ENCODE measurements at regions of chr15 and their contacts with region 1.

Region 1: GRCh38 chr15:93341164-93341563 is 252.2 kb upstream of the RGMA start:
- DNase-seq: peak; percentile 56 to 60
- H3K4me3 ChIP-seq: no peak overlapping the region
- H3K4me3 Mint-ChIP-seq: no peak overlapping the region
- H3K27ac Mint-ChIP-seq: peak overlapping the region; percentile 81
- H3K4me1 ChIP-seq: peaks cover 27% of the 10 kb centered on the region
- H3K4me1 Mint-ChIP-seq: peaks cover 16% of the 10 kb centered on the region
- H3K27me3 ChIP-seq: no peaks in the 10 kb centered on the region
- H3K27me3 Mint-ChIP-seq: no peaks in the 10 kb centered on the region
- CTCF ChIP-seq: no peak

Region 2: DNA sequence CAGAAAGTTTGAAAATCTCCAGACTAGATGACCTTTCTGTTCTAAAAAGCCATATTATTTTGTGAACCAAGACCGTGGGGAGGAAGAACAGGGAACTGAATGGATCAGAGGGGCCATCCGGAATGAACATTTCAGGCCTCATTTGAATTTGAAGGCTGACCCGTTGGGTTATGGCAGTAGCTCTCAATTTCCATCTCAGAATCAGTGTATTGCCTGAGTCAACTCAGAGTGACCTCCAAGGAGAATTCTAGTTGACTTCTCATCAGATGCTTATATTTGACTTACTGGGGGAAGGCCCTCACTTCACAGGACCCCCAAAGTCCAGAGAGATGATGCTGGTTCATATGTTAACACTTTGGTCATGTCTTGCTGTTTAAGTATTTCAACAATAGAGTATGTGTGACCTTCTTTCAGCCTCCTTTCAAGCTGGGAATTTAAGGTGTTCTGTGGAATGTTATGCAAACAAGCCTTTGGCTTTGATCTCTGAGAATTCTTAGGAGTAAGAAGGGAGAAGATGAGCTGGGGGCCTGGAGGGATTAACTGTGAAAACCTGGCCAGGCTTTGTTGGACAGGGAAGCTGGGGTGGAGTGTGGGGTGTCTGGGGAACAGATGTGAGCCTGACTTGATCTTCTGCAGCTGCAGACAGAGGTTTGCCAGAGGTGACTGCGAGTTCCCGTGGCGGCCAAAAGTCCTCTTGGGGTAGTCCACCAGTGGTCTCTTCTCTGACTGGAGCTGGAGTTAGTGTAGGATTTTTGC is 140.9 kb before region 1 on chr15:
- CTCF ChIA-PET with region 1: no interaction called
- POLR2A ChIA-PET with region 1: no interaction called
- intact Hi-C with region 1: loop called (anchors 1 kb)
- DNase-seq: peak; percentile 43 to 51
- H3K4me3 ChIP-seq: no peak overlapping the region
- H3K4me3 Mint-ChIP-seq: peak overlapping the region; percentile 2
- H3K27ac Mint-ChIP-seq: peak overlapping the region; percentile 68
- H3K4me1 ChIP-seq: peaks cover 33% of the 10 kb centered on the region
- H3K4me1 Mint-ChIP-seq: peaks cover 30% of the 10 kb centered on the region
- H3K27me3 ChIP-seq: no peaks in the 10 kb centered on the region
- H3K27me3 Mint-ChIP-seq: no peaks in the 10 kb centered on the region
- CTCF ChIP-seq: no peak

Region 3: GRCh38 chr15:93321881-93322289 is 19.3 kb before region 1 on chr15:
- CTCF ChIA-PET with region 1: no interaction called
- POLR2A ChIA-PET with region 1: no interaction called
- intact Hi-C with region 1: loop called (anchors 2 kb)
- DNase-seq: peak; percentile 81 to 82
- H3K4me3 ChIP-seq: peak overlapping the region; percentile 15
- H3K4me3 Mint-ChIP-seq: peak overlapping the region; percentile 70
- H3K27ac Mint-ChIP-seq: peak overlapping the region; percentile 96
- H3K4me1 ChIP-seq: peaks cover 19% of the 10 kb centered on the region
- H3K4me1 Mint-ChIP-seq: peaks cover 25% of the 10 kb centered on the region
- H3K27me3 ChIP-seq: no peaks in the 10 kb centered on the region
- H3K27me3 Mint-ChIP-seq: no peaks in the 10 kb centered on the region
- CTCF ChIP-seq: no peak

Region 4: GRCh38 chr15:93954985-93955748 is 614.0 kb after region 1 on chr15:
- CTCF ChIA-PET with region 1: no interaction called
- POLR2A ChIA-PET with region 1: no interaction called
- intact Hi-C with region 1: loop called (anchors 1 kb)
- DNase-seq: peak; percentile 84 to 85
- H3K4me3 ChIP-seq: no peak overlapping the region
- H3K4me3 Mint-ChIP-seq: peak overlapping the region; percentile 64
- H3K27ac Mint-ChIP-seq: peak overlapping the region; percentile 50
- H3K4me1 ChIP-seq: peaks cover 17% of the 10 kb centered on the region
- H3K4me1 Mint-ChIP-seq: peaks cover 21% of the 10 kb centered on the region
- H3K27me3 ChIP-seq: no peaks in the 10 kb centered on the region
- H3K27me3 Mint-ChIP-seq: no peaks in the 10 kb centered on the region
- CTCF ChIP-seq: no peak

Measured in Caco-2 (cell line).